Right ventricle myocardium inferior (tissue), 1 donor: ENCODE measurements at regions of chr3 and their contacts with region 1.

Region 1: DNA sequence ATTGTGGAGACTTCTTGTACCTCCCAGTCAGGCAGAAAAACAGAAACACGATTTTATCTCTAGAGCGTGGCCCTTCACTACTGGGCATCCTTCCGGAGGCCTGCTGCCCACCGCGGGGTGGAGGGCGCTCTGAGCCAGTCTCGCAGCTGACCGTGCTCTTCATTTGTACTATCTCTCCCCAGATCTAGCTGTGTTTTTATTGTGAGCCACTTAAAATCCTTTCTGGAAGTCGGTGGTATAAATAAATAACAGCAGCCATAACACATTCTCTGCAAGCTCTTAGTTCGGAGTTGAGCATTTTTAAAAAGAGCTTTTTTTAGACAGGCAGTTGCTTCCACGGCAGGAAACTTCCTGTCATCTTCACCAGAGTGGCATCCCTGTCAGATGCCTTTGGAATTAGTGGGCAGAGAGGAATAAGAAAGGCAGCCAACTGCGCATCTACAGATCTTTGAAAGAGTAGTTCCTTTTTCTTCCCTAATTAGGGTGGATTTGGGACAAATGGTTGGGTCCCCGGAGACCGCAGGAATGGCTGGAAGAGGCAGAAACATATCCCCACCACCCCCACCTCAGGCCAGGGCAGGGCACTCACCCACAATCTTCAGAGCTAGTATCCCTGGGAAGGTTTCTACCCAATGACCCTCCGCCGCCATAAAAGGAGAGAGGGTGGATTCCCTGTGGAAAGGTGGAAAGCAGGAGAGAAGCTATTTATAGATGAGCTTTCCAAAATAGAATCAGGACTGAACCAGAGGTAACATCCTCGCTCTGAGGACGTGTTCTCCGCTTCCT is 91.1 kb downstream of the TOP2B start:
- DNase-seq: no peak
- ATAC-seq: peak; percentile 27

Region 2: DNA sequence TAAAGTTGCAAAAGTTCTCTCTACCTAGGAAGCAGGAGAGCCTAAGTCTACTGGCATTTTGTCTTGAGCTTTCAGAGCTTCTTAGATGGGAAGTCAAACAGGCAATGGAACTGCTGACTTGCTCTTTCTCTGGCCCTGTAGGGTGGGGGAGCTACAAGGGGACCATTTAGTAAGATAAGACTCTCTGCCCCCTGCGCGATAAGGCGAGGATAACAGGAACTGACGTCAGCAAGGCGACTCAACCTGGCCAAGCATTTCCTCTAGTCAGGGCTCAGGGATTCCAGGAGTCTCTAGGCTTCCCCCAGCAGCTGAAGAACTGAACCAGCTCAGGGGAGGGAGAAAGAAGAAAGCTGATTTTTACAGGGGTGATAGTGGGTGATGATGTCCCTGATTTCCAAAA is 139.7 kb before region 1 on chr3:
- intact Hi-C with region 1: loop called (anchors 5 kb)
- DNase-seq: no peak
- ATAC-seq: no peak